ENCODE measurements at regions of chr3 and their contacts with region 1.

Region 1: GRCh38 chr3:156151824-156152428 is 31.5 kb downstream of the KCNAB1 start:
- DNase-seq: no peak
- ATAC-seq: peak; percentile 37
- H3K4me3 Mint-ChIP-seq: no peak overlapping the region
- H3K27ac Mint-ChIP-seq: no peak overlapping the region
- H3K4me1 Mint-ChIP-seq: peaks cover 6% of the 10 kb centered on the region
- H3K27me3 Mint-ChIP-seq: no peaks in the 10 kb centered on the region
- CTCF ChIP-seq: no peak

Region 2: GRCh38 chr3:155323063-155323666 is 828.8 kb before region 1 on chr3:
- CTCF ChIA-PET with region 1: no interaction called
- POLR2A ChIA-PET with region 1: no interaction called
- intact Hi-C with region 1: no loop called
- DNase-seq: no peak
- ATAC-seq: no peak
- H3K4me3 Mint-ChIP-seq: no peak overlapping the region
- H3K27ac Mint-ChIP-seq: no peak overlapping the region
- H3K4me1 Mint-ChIP-seq: no peaks in the 10 kb centered on the region
- H3K27me3 Mint-ChIP-seq: no peaks in the 10 kb centered on the region
- CTCF ChIP-seq: peak; percentile 52

Region 3: DNA sequence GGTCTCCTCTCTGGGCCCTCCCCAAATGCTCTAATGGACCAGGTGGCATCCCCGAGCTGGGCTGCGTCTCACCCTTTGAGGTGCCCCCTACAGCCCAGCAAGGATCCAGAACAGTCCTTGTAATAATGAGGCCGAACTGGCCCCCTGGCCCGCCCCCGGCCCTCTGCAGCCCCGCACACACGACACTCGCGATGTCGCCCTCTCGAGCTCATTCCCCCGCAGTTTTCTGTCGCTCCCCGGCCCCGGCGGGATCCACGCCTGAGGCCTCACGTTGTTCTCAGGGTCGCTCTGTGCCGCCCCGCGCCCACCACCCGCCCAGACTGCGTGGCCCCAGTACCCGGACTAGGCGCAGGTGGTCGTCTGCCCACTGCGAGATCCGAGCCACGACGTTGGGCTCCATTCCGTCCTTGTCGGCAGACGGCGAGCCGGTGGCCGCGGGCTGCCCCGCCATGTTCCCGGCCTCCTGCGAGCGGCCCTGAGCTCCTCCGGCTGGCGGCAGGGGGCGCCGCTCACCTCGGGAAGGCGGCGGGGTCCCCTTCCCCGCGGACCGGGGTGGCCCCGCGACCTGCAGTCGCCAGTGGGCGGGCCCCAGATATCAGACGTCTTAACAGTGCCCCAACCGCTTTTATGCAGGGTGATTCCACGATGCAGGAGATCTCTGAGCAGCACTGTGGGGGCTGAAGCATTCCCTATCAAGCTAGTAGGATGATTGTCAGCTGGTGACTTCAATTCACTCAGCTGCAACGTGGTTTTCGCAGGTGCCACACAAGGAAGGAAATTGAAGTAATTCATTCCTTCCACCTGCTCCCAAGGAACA is 345.9 kb before region 1 on chr3 and contains the start of gene C3orf33:
- CTCF ChIA-PET with region 1: interaction called, 4 read pairs
- POLR2A ChIA-PET with region 1: no interaction called
- intact Hi-C with region 1: loop called (anchors 1 kb)
- DNase-seq: peak; percentile 75
- ATAC-seq: peak; percentile 93
- H3K4me3 Mint-ChIP-seq: peak within 1 kb of the TSS; percentile 90
- H3K27ac Mint-ChIP-seq: peak within 1 kb of the TSS; percentile 80
- H3K4me1 Mint-ChIP-seq: peaks cover 3% of the 10 kb centered on the region
- H3K27me3 Mint-ChIP-seq: peaks cover 6% of the 10 kb centered on the region
- CTCF ChIP-seq: peak; percentile 82
- total RNA-seq, gene C3orf33: 1.6 and 2.4 TPM in 2 replicates

Region 4: DNA sequence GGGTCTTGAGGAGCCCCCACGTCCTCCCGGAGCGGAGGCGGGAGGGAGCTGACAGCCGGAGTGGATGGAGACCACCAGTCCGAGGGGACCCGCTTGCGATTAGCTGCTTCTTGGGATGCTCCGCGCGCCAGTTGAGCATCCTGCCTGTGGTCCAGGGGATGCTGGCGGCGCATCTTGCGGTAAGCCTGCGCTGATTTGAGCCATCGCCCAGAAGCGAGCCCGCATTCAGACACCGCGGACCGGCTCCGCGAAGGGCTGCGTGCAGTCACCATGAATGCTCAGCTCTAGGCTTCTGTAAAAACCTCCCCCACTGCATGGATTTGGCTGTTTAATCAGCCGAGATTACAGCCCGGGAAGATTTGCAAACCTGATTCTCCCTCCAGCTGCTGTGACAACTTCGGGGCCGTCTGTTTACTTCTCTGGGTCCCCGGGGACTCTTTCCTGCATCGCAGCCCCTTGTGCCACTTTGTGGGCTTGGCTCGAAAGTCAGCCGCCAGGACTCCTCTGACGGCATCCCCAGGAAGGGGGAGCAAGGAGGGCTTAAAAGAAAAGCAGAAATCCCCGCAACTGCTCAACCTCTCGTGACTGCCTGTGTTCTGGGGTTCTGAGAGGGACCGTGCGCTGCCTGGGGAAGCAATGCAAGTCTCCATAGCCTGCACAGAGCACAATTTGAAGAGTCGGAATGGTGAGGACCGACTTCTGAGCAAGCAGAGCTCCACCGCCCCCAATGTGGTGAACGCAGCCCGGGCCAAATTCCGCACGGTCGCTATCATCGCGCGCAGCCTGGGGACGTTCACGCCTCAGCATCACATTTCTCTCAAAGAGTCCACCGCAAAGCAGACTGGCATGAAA is 139.6 kb after region 1 on chr3:
- CTCF ChIA-PET with region 1: no interaction called
- POLR2A ChIA-PET with region 1: no interaction called
- intact Hi-C with region 1: no loop called
- DNase-seq: no peak
- ATAC-seq: no peak
- H3K4me3 Mint-ChIP-seq: no peak overlapping the region
- H3K27ac Mint-ChIP-seq: no peak overlapping the region
- H3K4me1 Mint-ChIP-seq: peaks cover 4% of the 10 kb centered on the region
- H3K27me3 Mint-ChIP-seq: peaks cover 51% of the 10 kb centered on the region
- CTCF ChIP-seq: no peak

Region 5: GRCh38 chr3:156449712-156450574 is 298.0 kb after region 1 on chr3:
- CTCF ChIA-PET with region 1: interaction called, 11 read pairs
- POLR2A ChIA-PET with region 1: no interaction called
- intact Hi-C with region 1: loop called (anchors 5 kb)
- DNase-seq: no peak
- ATAC-seq: no peak
- H3K4me3 Mint-ChIP-seq: no peak overlapping the region
- H3K27ac Mint-ChIP-seq: no peak overlapping the region
- H3K4me1 Mint-ChIP-seq: peaks cover 10% of the 10 kb centered on the region
- H3K27me3 Mint-ChIP-seq: peaks cover 13% of the 10 kb centered on the region
- CTCF ChIP-seq: no peak

Region 6: DNA sequence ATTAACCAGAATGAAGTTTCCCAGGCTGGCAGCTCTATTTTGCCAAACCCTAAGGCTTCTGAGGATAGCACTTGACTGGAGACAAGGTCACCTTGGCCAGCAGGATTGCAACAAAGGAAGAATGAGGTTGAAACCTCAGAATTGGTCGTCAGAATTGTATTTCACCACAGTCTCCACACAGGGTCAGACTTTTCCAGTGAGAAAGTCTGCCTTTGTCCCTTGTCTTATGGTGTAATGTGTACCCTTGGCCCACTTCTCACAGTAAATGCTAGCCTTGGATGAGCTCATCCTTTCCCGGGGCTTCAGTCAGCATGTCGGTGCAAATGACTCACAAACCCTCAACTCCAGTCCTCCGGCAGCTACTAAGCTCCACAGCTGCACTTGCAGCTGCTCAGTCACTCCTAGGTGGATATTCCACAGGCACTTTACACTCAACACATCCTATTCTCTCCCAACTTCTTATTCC is 383.3 kb after region 1 on chr3:
- CTCF ChIA-PET with region 1: interaction called, 10 read pairs
- POLR2A ChIA-PET with region 1: no interaction called
- intact Hi-C with region 1: no loop called
- DNase-seq: no peak
- ATAC-seq: no peak
- H3K4me3 Mint-ChIP-seq: no peak overlapping the region
- H3K27ac Mint-ChIP-seq: no peak overlapping the region
- H3K4me1 Mint-ChIP-seq: no peaks in the 10 kb centered on the region
- H3K27me3 Mint-ChIP-seq: no peaks in the 10 kb centered on the region
- CTCF ChIP-seq: no peak

Region 7: DNA sequence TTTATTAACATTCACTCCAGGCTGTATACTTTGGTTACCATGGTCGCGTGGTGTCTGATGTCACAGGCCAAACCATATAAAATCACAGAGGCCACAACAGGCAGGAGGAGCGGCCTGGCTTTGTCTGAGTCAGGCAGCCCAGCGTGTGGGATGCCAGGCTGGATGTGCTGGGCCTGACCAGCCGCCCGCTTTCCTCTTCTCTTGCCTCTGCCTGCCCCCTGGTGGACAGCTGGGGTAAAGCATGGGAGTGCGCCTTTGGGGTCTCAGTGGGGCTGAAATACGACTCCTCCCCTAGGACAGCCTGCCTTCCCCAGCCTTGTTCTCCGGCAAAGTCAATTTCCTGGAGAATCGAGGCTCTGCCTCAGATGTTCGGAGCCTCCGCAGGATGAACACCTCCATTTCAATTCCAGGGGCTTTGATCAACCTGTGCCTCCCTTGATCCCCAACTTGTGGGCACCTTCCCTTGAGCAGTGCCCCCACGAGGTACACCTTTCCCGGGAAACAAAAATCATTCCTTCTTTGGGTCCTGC is 929.8 kb after region 1 on chr3:
- CTCF ChIA-PET with region 1: interaction called, 8 read pairs
- POLR2A ChIA-PET with region 1: no interaction called
- intact Hi-C with region 1: loop called (anchors 1 kb)
- DNase-seq: peak; percentile 86
- ATAC-seq: peak; percentile 99
- H3K4me3 Mint-ChIP-seq: no peak overlapping the region
- H3K27ac Mint-ChIP-seq: peak overlapping the region; percentile 63
- H3K4me1 Mint-ChIP-seq: peaks cover 10% of the 10 kb centered on the region
- H3K27me3 Mint-ChIP-seq: no peaks in the 10 kb centered on the region
- CTCF ChIP-seq: peak; percentile 88

Region 8: GRCh38 chr3:157136647-157137387 is 984.9 kb after region 1 on chr3:
- CTCF ChIA-PET with region 1: interaction called, 16 read pairs
- POLR2A ChIA-PET with region 1: no interaction called
- intact Hi-C with region 1: loop called (anchors 1 kb)
- DNase-seq: no peak
- ATAC-seq: no peak
- H3K4me3 Mint-ChIP-seq: no peak overlapping the region
- H3K27ac Mint-ChIP-seq: no peak overlapping the region
- H3K4me1 Mint-ChIP-seq: peaks cover 5% of the 10 kb centered on the region
- H3K27me3 Mint-ChIP-seq: no peaks in the 10 kb centered on the region
- CTCF ChIP-seq: no peak

Region 9: GRCh38 chr3:157493627-157494550 is 1342.0 kb after region 1 on chr3:
- CTCF ChIA-PET with region 1: no interaction called
- POLR2A ChIA-PET with region 1: no interaction called
- intact Hi-C with region 1: loop called (anchors 5 kb)
- DNase-seq: no peak
- ATAC-seq: no peak
- H3K4me3 Mint-ChIP-seq: no peak overlapping the region
- H3K27ac Mint-ChIP-seq: no peak overlapping the region
- H3K4me1 Mint-ChIP-seq: no peaks in the 10 kb centered on the region
- H3K27me3 Mint-ChIP-seq: peaks cover 17% of the 10 kb centered on the region
- CTCF ChIP-seq: no peak

Measured in activated B cell treated with CpG ODN at 0.5 μM for 24 hours (primary cell).